Heart right ventricle (tissue), 16 donors: ENCODE measurements at regions of chr22 and their contacts with region 1.

Region 1: GRCh38 chr22:44363272-44363979 is 50.7 kb upstream of the SHISAL1 start:
- DNase-seq: peak; percentile 92 to 93
- ATAC-seq: peak; percentile 76 to 92 (median 88)
- H3K4me3 ChIP-seq: no peak overlapping the region
- H3K27ac ChIP-seq: peak overlapping the region in 9 of 10 donors; percentile 22 to 89 (median 73)
- H3K4me1 ChIP-seq: peaks cover 11 to 71% (median 45%) of the 10 kb centered on the region in 9 donors
- H3K27me3 ChIP-seq: no peaks in the 10 kb centered on the region
- CTCF ChIP-seq: no peak

Region 2: DNA sequence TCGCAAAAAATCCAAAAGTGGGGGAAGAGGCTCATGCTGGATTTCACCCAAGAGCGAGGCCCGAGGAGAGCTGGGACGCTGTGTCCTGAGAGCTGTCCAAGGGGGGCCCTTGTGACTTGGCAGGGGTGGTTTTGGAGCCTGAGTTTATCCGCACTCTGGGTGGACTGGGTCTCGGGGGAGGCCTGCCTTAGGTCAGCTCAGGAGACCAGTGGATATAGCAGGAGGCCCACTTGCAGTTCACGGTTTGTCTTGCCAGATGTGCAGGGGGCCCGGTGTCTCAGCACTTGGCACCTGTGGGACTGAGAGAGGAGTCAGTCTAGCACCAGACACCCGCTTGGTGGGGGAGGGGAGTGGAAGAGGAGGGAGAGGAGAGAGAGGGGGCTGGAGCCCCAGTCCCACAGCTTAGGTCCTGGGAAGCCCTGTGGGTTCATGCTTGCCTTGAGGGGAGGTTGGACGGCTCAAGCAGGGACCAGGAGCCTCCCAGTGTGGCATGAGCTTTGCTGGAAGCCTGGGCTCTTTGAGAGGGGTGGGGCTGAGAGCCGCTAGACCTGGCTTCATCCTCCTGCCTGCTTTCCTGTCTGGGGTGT is 305.9 kb before region 1 on chr22:
- intact Hi-C with region 1: no loop called
- DNase-seq: peak; percentile 73 to 75
- ATAC-seq: peak; percentile 81 to 95 (median 92)
- H3K4me3 ChIP-seq: peak overlapping the region in 3 of 10 donors; percentile 9 to 16 (median 13)
- H3K27ac ChIP-seq: peak overlapping the region in 9 of 10 donors; percentile 50 to 85 (median 78)
- H3K4me1 ChIP-seq: peaks cover 6 to 25% (median 13%) of the 10 kb centered on the region in 9 donors
- H3K27me3 ChIP-seq: no peaks in the 10 kb centered on the region
- CTCF ChIP-seq: no peak

Region 3: DNA sequence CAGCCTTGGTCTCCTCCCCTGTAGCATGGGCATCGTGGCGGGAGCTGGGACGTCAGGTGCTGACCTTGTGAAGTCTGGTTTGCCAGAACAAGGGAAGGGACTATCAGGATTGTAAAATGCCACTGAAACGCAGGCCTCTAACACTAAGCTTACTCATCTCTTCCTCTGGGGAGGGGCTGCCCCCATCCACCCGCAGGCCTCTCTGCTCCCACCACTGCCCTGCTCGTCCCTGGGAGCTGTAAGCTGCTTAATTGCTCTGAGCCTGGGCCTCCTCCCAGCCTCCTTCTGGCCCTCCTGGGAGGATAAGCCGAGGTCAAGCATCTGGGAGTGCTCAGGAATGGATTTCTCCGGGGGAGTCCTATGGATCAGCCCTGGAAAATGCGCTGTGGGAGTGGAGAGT is 59.1 kb before region 1 on chr22:
- intact Hi-C with region 1: no loop called
- DNase-seq: no peak
- ATAC-seq: no peak
- H3K4me3 ChIP-seq: no peak overlapping the region
- H3K27ac ChIP-seq: no peak overlapping the region
- H3K4me1 ChIP-seq: peaks cover 2 to 20% (median 11%) of the 10 kb centered on the region in 9 donors
- H3K27me3 ChIP-seq: peaks cover 0 to 5% (median 0%) of the 10 kb centered on the region in 7 donors
- CTCF ChIP-seq: no peak

Region 4: DNA sequence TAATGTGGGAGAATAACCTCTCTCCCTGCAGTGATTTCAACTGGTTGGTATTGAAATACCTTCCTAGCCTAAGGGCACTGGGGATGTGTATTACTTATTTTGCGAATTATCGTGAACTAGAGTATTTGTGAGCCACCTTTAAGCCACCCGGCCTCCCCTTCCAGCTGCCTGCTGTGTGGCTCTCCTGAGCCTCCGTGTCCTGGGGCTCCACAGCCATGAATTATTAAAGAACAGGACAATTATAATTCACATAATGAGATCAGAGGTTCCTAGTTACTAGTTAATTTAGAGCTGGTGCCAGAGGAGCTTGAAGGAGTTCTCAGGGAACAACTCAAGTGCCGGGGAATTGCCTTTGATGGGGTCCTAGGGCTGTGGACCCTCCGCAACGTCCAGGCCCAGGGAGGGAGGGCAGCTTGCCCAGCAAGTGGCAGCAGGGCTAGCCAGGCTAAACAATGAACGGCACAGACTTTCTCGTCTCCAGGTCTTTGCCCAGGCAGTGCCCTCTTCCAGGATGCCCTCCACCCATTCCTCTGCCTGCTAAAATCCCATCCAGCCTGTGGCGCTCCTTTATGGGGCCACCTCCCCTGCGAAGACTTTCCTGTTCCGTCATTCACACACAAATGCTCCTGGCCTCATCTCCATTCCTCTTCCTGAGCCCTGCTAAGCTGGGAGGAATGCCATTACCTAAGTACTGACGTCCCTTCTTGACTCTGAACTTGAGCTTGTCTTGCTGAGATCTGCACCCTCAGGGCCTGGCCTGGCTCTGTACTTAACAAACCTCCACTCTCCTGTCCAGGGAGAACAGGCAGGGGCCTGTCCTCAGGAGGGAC is 43.1 kb after region 1 on chr22:
- intact Hi-C with region 1: no loop called
- DNase-seq: no peak
- ATAC-seq: no peak
- H3K4me3 ChIP-seq: no peak overlapping the region
- H3K27ac ChIP-seq: no peak overlapping the region
- H3K4me1 ChIP-seq: peaks cover 0 to 37% (median 5%) of the 10 kb centered on the region in 9 donors
- H3K27me3 ChIP-seq: no peaks in the 10 kb centered on the region
- CTCF ChIP-seq: no peak

Region 5: DNA sequence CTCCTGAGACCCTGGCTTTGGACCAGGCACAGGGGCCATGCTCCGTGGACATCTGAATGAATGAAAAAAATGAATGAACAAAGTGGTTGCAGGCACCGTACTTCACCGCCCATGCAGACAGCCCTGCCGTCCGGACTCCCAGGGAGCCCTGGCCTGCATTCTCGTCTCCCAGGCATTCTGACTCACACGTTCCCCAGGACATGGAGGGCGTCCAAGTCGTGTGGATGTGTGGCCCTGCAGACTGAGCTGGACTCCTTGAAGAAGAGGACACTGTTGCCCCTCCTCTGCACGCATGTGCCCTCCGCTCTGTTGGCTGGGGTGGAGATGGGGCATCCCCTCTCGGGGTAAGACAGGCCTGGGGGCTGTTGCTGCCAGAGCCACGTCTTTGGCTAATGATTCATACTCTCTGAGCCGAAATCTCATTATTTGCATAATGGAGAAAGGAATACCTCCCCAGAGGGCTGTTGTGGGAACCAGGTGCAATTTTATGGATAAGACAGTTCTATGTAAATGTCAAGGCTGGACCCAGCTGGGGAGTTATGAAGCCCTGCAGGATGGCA is 84.9 kb after region 1 on chr22:
- intact Hi-C with region 1: no loop called
- DNase-seq: peak; percentile 67 to 70
- ATAC-seq: peak; percentile 66 to 95 (median 90)
- H3K4me3 ChIP-seq: no peak overlapping the region
- H3K27ac ChIP-seq: no peak overlapping the region
- H3K4me1 ChIP-seq: peaks cover 0 to 23% (median 18%) of the 10 kb centered on the region in 9 donors
- H3K27me3 ChIP-seq: no peaks in the 10 kb centered on the region
- CTCF ChIP-seq: no peak

Region 6: GRCh38 chr22:44497218-44497904 is 133.9 kb after region 1 on chr22:
- intact Hi-C with region 1: loop called in 2 of 10 experiments (anchors 5 to 10 kb)
- DNase-seq: peak in 1 of 2 donors; percentile 11
- ATAC-seq: peak in 2 of 8 donors; percentile 3 to 22
- H3K4me3 ChIP-seq: peak overlapping the region; percentile 29 to 95 (median 77)
- H3K27ac ChIP-seq: peak overlapping the region; percentile 11 to 91 (median 82)
- H3K4me1 ChIP-seq: peaks cover 3 to 29% (median 19%) of the 10 kb centered on the region in 9 donors
- H3K27me3 ChIP-seq: no peaks in the 10 kb centered on the region
- CTCF ChIP-seq: no peak